ENCODE measurements at regions of chr3 and their contacts with region 1.

Region 1: DNA sequence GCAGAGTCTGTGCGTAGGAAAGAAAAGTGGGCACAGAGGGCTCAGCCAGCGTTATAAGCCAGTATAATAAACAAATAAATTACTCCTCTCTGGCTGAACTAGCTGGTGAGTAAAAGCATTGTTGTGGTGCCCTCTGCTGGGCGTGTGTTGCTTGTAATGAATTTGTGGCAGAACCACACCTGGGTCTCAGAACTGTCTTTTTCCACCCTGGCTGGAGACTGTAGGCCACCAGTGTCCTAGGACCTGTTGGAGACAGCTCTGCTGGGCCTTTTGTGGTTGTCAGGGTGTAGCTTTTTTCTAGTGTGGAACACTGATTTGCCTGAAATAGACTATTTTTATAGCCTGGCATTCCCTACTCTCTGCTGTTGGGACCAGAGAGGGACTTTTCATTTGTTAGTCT is 130.5 kb upstream of the EIF1B start:
- DNase-seq: peak; percentile 63
- H3K4me3 ChIP-seq: peak overlapping the region in 1 of 2 experiments; percentile 14; a peak in 1 of 4 replicates
- H3K27ac ChIP-seq: no peak overlapping the region
- H3K4me1 ChIP-seq: peaks cover 0 to 3% of the 10 kb centered on the region in 2 experiments; a peak in 1 of 4 replicates
- H3K27me3 ChIP-seq: no peaks in the 10 kb centered on the region
- CTCF ChIP-seq: peak; percentile 84
- EP300 ChIP-seq: no peak
- RAD21 ChIP-seq: peak; percentile 93

Region 2: DNA sequence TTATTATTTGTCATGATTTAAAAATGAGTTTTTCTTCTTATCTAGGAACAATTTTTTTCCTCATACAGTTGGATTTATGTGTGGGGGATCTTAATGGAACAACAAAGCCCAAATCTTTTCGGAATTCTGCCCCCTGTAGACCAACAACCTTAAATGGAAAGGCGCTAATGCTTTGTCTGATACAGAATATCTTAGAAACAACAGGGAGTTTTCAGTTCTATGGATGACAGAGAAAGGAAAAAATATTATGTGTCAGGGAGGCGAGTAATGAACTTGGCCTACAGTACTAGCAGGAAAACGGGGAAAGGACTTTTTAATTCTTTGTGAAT is 710.9 kb before region 1 on chr3:
- CTCF ChIA-PET with region 1: no interaction called
- POLR2A ChIA-PET with region 1: no interaction called
- DNase-seq: no peak
- H3K4me3 ChIP-seq: no peak overlapping the region
- H3K27ac ChIP-seq: no peak overlapping the region
- H3K4me1 ChIP-seq: no peaks in the 10 kb centered on the region; a peak in 1 of 4 replicates
- H3K27me3 ChIP-seq: no peaks in the 10 kb centered on the region
- CTCF ChIP-seq: no peak
- EP300 ChIP-seq: no peak
- RAD21 ChIP-seq: no peak

Region 3: DNA sequence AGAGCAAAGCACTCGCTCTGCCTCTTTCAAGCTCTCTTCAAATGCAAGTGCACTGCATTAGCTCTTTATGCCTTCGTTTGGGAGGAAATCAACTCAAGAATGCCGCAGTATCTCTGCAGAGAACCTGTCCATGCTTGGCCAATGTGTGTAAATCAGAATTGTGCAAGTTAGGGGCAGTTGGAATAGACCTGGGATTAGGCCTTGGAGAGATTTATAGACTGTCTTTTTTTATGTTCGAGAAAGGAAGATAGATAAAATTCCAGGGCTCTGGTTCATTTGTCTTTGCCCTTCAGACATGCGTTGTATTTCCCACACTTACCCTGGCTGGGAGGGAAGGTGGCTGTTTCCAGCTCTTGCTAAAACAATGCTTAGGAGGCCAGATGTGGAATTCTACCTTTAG is 547.9 kb before region 1 on chr3:
- CTCF ChIA-PET with region 1: no interaction called
- POLR2A ChIA-PET with region 1: no interaction called
- DNase-seq: no peak
- H3K4me3 ChIP-seq: no peak overlapping the region
- H3K27ac ChIP-seq: no peak overlapping the region
- H3K4me1 ChIP-seq: no peaks in the 10 kb centered on the region
- H3K27me3 ChIP-seq: no peaks in the 10 kb centered on the region
- CTCF ChIP-seq: no peak
- EP300 ChIP-seq: no peak
- RAD21 ChIP-seq: no peak

Region 4: DNA sequence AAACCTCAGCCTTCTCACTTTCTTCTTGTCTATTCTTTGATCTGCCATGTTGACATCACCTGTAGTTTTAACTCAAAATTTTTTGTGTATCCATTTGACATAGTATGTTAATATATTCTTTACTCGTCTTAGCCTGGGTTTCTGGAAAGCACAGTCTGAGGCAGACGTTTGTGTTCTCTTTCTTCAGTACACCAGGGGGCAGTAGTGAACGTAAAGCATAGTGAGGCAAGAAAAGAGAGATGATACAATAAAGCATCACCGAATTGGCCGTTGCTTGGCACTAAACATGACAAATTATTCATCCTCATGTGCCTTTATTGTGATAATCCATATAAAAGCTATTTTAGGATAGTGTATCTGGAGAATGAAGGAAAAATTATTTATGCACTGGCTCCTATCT is 510.6 kb before region 1 on chr3:
- CTCF ChIA-PET with region 1: interaction called, 30 read pairs
- POLR2A ChIA-PET with region 1: no interaction called
- DNase-seq: peak; percentile 38
- H3K4me3 ChIP-seq: no peak overlapping the region; a peak in 1 of 4 replicates
- H3K27ac ChIP-seq: no peak overlapping the region
- H3K4me1 ChIP-seq: no peaks in the 10 kb centered on the region
- H3K27me3 ChIP-seq: no peaks in the 10 kb centered on the region
- CTCF ChIP-seq: peak; percentile 78
- EP300 ChIP-seq: no peak
- RAD21 ChIP-seq: peak; percentile 71

Region 5: GRCh38 chr3:39724233-39724846 is 454.7 kb before region 1 on chr3:
- CTCF ChIA-PET with region 1: interaction called, 58 read pairs
- POLR2A ChIA-PET with region 1: no interaction called
- DNase-seq: peak; percentile 17
- H3K4me3 ChIP-seq: no peak overlapping the region
- H3K27ac ChIP-seq: no peak overlapping the region
- H3K4me1 ChIP-seq: peaks cover 0 to 8% of the 10 kb centered on the region in 2 experiments; a peak in 2 of 4 replicates
- H3K27me3 ChIP-seq: no peaks in the 10 kb centered on the region
- CTCF ChIP-seq: peak; percentile 50
- EP300 ChIP-seq: no peak
- RAD21 ChIP-seq: peak; percentile 67

Region 6: GRCh38 chr3:40191850-40192448 is 12.9 kb after region 1 on chr3:
- CTCF ChIA-PET with region 1: interaction called, 101 read pairs
- POLR2A ChIA-PET with region 1: no interaction called
- DNase-seq: peak; percentile 71
- H3K4me3 ChIP-seq: no peak overlapping the region; a peak in 1 of 4 replicates
- H3K27ac ChIP-seq: no peak overlapping the region
- H3K4me1 ChIP-seq: peaks cover 0 to 11% of the 10 kb centered on the region in 2 experiments; a peak in 1 of 4 replicates
- H3K27me3 ChIP-seq: no peaks in the 10 kb centered on the region
- CTCF ChIP-seq: peak; percentile 92
- EP300 ChIP-seq: no peak
- RAD21 ChIP-seq: peak; percentile 89

Region 7: GRCh38 chr3:40267937-40268723 is 89.1 kb after region 1 on chr3:
- CTCF ChIA-PET with region 1: no interaction called
- POLR2A ChIA-PET with region 1: no interaction called
- DNase-seq: peak; percentile 58
- H3K4me3 ChIP-seq: no peak overlapping the region
- H3K27ac ChIP-seq: peak overlapping the region in 1 of 2 experiments; percentile 60; a peak in 2 of 4 replicates
- H3K4me1 ChIP-seq: peaks cover 0 to 17% of the 10 kb centered on the region in 2 experiments; a peak in 2 of 4 replicates
- H3K27me3 ChIP-seq: no peaks in the 10 kb centered on the region
- CTCF ChIP-seq: no peak
- EP300 ChIP-seq: peak in 1 of 2 experiments; percentile 65; a peak in 1 of 4 replicates
- RAD21 ChIP-seq: no peak

Measured in SK-N-SH (cell line).